ENCODE measurements at regions of chr1 and their contacts with region 1.

Region 1: DNA sequence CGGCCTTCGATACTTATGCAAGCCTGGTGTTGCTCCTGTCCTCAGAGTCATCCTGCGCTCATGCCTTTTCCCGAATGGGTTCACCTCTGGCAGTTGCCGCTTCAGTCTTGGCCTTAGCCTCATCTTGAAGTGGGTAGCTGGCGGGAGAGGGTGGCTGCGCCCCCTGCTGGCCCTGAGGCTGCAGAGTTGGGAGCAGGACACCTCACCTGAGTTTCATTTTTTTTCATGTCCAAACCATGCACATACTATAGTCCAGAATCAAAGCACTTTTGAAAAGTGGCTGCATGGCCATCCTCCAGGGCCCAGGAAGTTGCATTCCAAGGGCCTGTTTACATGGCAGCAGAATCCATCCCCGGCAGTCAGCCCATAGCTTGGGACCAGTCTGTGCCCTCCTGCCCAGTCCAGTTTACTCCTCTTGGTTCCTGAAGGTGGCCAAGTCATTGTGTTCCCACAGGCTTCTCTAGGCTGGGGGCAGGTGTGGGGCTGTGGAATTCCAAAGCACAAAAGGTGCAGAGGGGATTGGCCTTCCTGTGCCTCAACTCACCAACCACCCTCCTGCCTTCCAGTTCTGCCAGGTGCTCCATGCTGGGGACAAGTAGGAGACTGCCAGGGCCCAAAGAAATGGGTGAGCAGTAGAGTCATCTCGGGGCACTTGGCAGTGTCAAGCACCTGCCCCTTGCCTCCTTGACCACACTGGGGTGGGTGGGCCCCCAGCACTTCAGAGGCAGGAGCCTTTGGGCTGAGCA is 44.0 kb downstream of the YARS1 start:
- DNase-seq: peak; percentile 92
- H3K4me3 Mint-ChIP-seq: no peak overlapping the region
- H3K27ac Mint-ChIP-seq: peak overlapping the region; percentile 35
- H3K4me1 Mint-ChIP-seq: peaks cover 16% of the 10 kb centered on the region
- H3K27me3 Mint-ChIP-seq: no peaks in the 10 kb centered on the region

Region 2: GRCh38 chr1:32448773-32449456 is 324.3 kb before region 1 on chr1:
- intact Hi-C with region 1: loop called (anchors 10 kb)
- DNase-seq: peak; percentile 61
- H3K4me3 Mint-ChIP-seq: no peak overlapping the region
- H3K27ac Mint-ChIP-seq: no peak overlapping the region
- H3K4me1 Mint-ChIP-seq: no peaks in the 10 kb centered on the region
- H3K27me3 Mint-ChIP-seq: peaks cover 20% of the 10 kb centered on the region

Region 3: DNA sequence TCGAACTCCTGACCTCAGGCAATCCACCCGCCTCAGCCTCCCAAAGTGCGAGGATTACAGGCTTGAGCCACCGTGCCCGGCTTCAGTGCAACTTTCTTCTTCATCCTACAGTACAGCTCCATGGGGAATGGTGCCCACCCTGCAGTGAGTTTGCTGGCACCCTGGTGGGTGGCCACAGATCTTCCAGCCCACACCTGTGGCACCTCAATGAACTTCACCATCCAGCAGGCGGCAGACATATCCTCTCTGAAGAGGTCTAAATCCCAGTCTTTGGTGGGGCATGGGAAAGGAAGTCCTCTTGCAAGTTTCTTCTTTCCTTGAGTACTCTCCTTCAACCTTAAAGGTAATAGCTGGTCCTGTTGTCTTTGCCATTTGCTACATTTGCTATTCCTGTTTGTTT is 252.0 kb before region 1 on chr1:
- intact Hi-C with region 1: loop called (anchors 1 kb)
- DNase-seq: no peak
- H3K4me3 Mint-ChIP-seq: peak overlapping the region; percentile 78
- H3K27ac Mint-ChIP-seq: peak overlapping the region; percentile 34
- H3K4me1 Mint-ChIP-seq: peaks cover 7% of the 10 kb centered on the region
- H3K27me3 Mint-ChIP-seq: peaks cover 5% of the 10 kb centered on the region

Region 4: GRCh38 chr1:32716312-32717148 is 56.7 kb before region 1 on chr1:
- intact Hi-C with region 1: loop called (anchors 1 kb)
- DNase-seq: peak; percentile 91
- H3K4me3 Mint-ChIP-seq: no peak overlapping the region
- H3K27ac Mint-ChIP-seq: no peak overlapping the region
- H3K4me1 Mint-ChIP-seq: peaks cover 6% of the 10 kb centered on the region
- H3K27me3 Mint-ChIP-seq: peaks cover 3% of the 10 kb centered on the region

Region 5: DNA sequence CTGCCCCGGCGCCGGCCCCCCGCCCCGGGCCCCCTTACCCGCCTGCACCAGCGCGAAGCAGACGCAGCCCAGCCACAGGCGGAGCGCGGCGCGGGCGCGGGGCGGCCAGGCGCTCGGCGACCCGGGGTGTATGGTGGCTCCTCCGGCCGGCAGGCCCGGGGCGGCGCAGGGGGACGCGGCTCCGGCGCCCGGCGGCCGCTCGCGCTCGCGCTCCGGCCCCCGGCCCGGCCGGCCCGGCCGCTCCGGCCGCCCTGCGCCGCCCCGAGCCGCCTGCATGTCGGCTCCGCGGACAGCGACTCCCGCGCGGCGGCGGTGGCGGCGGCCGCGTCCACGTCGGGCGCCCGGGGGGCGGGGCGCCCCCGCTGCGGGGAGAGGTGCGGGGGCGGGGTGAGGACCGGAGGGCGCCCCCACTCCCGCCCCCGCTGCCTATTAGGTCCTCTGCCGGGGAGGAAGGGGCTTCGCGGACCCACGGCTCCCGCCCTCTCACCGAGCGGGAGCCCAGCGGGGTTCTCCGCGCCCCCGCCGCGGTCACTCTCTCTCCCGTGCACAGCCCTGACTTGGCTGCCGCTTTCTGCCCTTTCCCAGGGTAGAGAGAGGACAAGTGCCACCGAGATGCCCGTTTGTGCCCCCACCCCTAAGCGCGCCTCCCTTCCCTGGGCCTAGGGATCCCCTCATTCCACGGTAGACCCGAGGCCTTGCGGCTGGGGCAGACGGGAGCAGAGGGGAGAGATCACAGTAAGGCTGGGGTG is 97.6 kb after region 1 on chr1 and contains the start of gene FNDC5:
- intact Hi-C with region 1: loop called (anchors 5 kb)
- DNase-seq: peak; percentile 58
- H3K4me3 Mint-ChIP-seq: peak within 1 kb of the TSS; percentile 68
- H3K27ac Mint-ChIP-seq: no peak within 1 kb of the TSS
- H3K4me1 Mint-ChIP-seq: peaks cover 3% of the 10 kb centered on the region
- H3K27me3 Mint-ChIP-seq: peaks cover 47% of the 10 kb centered on the region
- total RNA-seq, gene FNDC5: not detected in 2 replicates

Measured in activated CD4-positive, alpha-beta T cell treated with anti-CD3 and anti-CD28 coated beads, Interleukin-2, amount 10 ng/mL, durations not matched to agents 24 days and 14 days (primary cell).